B cell (primary cell): ENCODE measurements at regions of chr7 and their contacts with region 1.

Region 1: DNA sequence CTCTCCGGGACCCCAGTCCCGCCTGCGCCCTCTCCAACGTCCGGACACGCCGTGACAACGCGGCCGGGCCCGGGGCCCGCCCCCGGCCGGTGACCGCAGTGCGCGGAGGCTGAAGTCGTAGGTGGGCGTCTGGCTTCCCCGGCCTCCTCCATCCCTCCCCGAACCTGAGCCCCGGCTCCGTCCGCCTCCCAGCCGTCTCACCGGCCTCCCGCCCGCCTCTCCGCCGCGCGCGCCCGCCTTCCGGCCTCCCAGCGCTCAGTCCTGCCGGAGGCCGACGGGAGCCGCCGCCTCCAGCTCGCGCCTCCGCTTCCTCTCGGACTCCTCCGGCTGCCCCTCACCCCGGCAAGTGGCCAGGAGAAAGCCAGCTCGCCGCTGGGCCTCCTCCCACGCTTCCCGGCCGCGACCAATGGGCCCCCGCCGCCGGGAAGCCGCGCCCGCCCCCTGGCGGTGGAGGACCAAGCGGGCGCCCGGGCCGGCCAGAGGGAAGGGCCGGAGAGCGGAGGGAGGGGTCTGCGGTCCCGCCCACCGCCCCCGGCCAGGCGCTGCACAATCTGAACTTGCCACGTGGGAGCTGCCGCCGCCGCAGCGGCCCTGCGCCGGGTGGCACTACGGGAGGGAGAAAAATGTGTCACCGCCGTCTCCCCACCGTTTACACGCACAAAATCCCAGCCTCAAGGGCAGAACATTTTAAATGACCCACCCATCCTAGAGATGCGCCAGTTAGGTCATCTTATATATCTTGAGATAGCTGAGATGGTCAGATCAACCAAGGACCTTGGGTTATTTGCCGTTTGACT is at the start of gene FAM3C:
- DNase-seq: peak; percentile 94
- ATAC-seq: peak; percentile 89
- H3K4me3 ChIP-seq: peak within 1 kb of the TSS; percentile 65 to 90 (median 82)
- H3K4me3 Mint-ChIP-seq: peak within 1 kb of the TSS; percentile 92
- H3K27ac ChIP-seq: peak within 1 kb of the TSS; percentile 82 to 96
- H3K27ac Mint-ChIP-seq: peak within 1 kb of the TSS; percentile 97
- H3K4me1 ChIP-seq: peaks cover 32 to 36% of the 10 kb centered on the region in 2 donors
- H3K4me1 Mint-ChIP-seq: peaks cover 42% of the 10 kb centered on the region
- H3K27me3 ChIP-seq: no peaks in the 10 kb centered on the region
- H3K27me3 Mint-ChIP-seq: no peaks in the 10 kb centered on the region
- CTCF ChIP-seq: peak; percentile 91
- total RNA-seq, gene FAM3C: 73.1 and 75.4 TPM in 2 replicates

Region 2: DNA sequence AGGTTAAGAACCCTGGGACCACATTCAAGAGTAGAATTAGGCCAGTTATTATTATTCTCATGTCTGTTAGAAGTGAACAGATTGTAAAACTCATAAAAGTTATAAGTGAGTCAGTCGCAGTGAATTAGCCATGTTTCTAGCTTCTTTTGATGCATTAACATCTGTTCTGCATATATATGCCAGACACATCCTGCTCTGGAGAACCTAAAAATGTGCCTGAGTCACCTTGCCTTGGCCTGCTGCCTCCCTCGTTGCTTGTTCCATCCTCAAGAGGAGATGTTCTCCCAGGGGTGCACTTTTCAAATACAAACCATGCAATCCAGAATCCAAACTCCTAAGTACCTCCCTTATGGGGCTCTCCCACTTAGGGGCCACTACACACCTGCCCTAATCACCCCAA is 553.0 kb before region 1 on chr7:
- CTCF ChIA-PET with region 1: no interaction called
- POLR2A ChIA-PET with region 1: no interaction called
- intact Hi-C with region 1: no loop called
- DNase-seq: no peak
- ATAC-seq: no peak
- H3K4me3 ChIP-seq: no peak overlapping the region
- H3K4me3 Mint-ChIP-seq: no peak overlapping the region
- H3K27ac ChIP-seq: no peak overlapping the region
- H3K27ac Mint-ChIP-seq: no peak overlapping the region
- H3K4me1 ChIP-seq: no peaks in the 10 kb centered on the region
- H3K4me1 Mint-ChIP-seq: no peaks in the 10 kb centered on the region
- H3K27me3 ChIP-seq: no peaks in the 10 kb centered on the region
- H3K27me3 Mint-ChIP-seq: peaks cover 9% of the 10 kb centered on the region
- CTCF ChIP-seq: no peak

Region 3: GRCh38 chr7:120950539-120951308 is 445.4 kb before region 1 on chr7 and contains the start of gene ING3:
- CTCF ChIA-PET with region 1: interaction called, 5 read pairs
- POLR2A ChIA-PET with region 1: no interaction called
- intact Hi-C with region 1: loop called (anchors 1 kb)
- DNase-seq: peak; percentile 99
- ATAC-seq: peak; percentile 91
- H3K4me3 ChIP-seq: peak within 1 kb of the TSS; percentile 71 to 99 (median 83)
- H3K4me3 Mint-ChIP-seq: peak within 1 kb of the TSS; percentile 99
- H3K27ac ChIP-seq: peak within 1 kb of the TSS; percentile 95 to 96
- H3K27ac Mint-ChIP-seq: peak within 1 kb of the TSS; percentile 99
- H3K4me1 ChIP-seq: peaks cover 14 to 15% of the 10 kb centered on the region in 2 donors
- H3K4me1 Mint-ChIP-seq: peaks cover 20% of the 10 kb centered on the region
- H3K27me3 ChIP-seq: no peaks in the 10 kb centered on the region
- H3K27me3 Mint-ChIP-seq: peaks cover 3% of the 10 kb centered on the region
- CTCF ChIP-seq: no peak
- total RNA-seq, gene ING3: 38.0 and 41.7 TPM in 2 replicates

Region 4: GRCh38 chr7:121329191-121330052 is 66.7 kb before region 1 on chr7:
- CTCF ChIA-PET with region 1: interaction called, 4 read pairs
- POLR2A ChIA-PET with region 1: no interaction called
- intact Hi-C with region 1: loop called (anchors 5 kb)
- DNase-seq: peak; percentile 65
- ATAC-seq: peak; percentile 49
- H3K4me3 ChIP-seq: peak overlapping the region; percentile 54 to 97 (median 86)
- H3K4me3 Mint-ChIP-seq: peak overlapping the region; percentile 91
- H3K27ac ChIP-seq: peak overlapping the region; percentile 25 to 32
- H3K27ac Mint-ChIP-seq: peak overlapping the region; percentile 92
- H3K4me1 ChIP-seq: peaks cover 20 to 21% of the 10 kb centered on the region in 2 donors
- H3K4me1 Mint-ChIP-seq: peaks cover 46% of the 10 kb centered on the region
- H3K27me3 ChIP-seq: peaks cover 0 to 3% (median 0%) of the 10 kb centered on the region in 4 experiments
- H3K27me3 Mint-ChIP-seq: peaks cover 13% of the 10 kb centered on the region
- CTCF ChIP-seq: peak; percentile 26

Region 5: GRCh38 chr7:121366852-121367431 is 29.2 kb before region 1 on chr7:
- CTCF ChIA-PET with region 1: interaction called, 286 read pairs
- POLR2A ChIA-PET with region 1: interaction called, 6 read pairs
- intact Hi-C with region 1: loop called (anchors 1 kb)
- DNase-seq: peak; percentile 74
- ATAC-seq: no peak
- H3K4me3 ChIP-seq: no peak overlapping the region
- H3K4me3 Mint-ChIP-seq: peak overlapping the region; percentile 6
- H3K27ac ChIP-seq: peak overlapping the region in 1 of 2 donors; percentile 76
- H3K27ac Mint-ChIP-seq: peak overlapping the region; percentile 44
- H3K4me1 ChIP-seq: peaks cover 42 to 46% of the 10 kb centered on the region in 2 donors
- H3K4me1 Mint-ChIP-seq: peaks cover 55% of the 10 kb centered on the region
- H3K27me3 ChIP-seq: no peaks in the 10 kb centered on the region
- H3K27me3 Mint-ChIP-seq: no peaks in the 10 kb centered on the region
- CTCF ChIP-seq: peak; percentile 92

Region 6: DNA sequence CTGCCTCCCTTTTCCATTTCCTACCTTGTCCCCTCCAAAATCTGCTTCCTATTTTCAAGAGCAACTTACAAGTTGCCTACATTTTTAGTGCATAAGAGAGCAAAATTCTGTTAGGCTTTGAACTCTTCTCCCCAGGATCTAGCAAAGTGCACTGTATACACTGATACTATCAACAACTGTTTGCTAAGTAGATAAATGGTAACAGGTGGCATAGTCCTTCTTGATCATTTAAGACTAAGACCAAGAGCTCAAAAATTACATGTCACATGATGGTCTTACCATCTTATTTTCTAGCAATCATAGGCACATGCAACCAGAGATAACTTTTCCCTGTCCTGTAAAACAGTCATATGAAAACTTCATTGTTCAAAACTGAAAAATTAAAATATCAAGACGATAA is 16.2 kb before region 1 on chr7:
- CTCF ChIA-PET with region 1: interaction called, 286 read pairs
- POLR2A ChIA-PET with region 1: interaction called, 26 read pairs
- intact Hi-C with region 1: no loop called
- DNase-seq: no peak
- ATAC-seq: no peak
- H3K4me3 ChIP-seq: no peak overlapping the region
- H3K4me3 Mint-ChIP-seq: peak overlapping the region; percentile 58
- H3K27ac ChIP-seq: peak overlapping the region; percentile 42 to 99
- H3K27ac Mint-ChIP-seq: peak overlapping the region; percentile 90
- H3K4me1 ChIP-seq: peaks cover 84 to 87% of the 10 kb centered on the region in 2 donors
- H3K4me1 Mint-ChIP-seq: peaks cover 83% of the 10 kb centered on the region
- H3K27me3 ChIP-seq: no peaks in the 10 kb centered on the region
- H3K27me3 Mint-ChIP-seq: no peaks in the 10 kb centered on the region
- CTCF ChIP-seq: no peak

Region 7: DNA sequence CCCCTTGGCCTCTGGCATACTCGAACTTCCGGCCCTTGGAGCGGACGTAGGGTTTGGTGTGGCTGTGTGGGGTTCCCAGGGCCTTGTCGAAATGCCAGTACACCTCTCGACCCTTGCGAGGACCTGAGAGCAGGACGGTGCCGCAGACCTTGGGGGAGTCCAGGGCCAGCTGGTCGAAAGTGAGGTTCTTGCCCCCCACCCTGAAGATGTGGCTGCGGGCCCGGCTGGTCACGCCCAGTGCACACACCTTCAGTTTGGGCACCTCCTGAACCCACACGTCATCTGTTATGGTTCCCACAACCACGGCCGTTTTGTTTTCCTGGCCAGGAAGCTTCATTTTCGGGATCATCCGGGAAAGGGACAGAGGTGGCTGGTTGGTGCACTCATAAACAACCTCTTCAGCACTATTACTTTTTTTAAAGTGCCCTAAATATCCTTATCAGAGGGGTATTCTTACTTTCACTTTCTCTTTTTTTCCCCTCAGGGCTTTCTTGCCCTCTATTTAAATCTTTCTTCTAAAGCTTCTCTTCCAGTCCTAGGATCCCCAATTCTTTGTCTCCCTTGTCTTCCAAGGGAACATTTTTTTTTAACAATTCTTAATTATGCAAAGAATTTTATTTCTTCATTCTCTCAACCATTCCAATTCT is 44.8 kb after region 1 on chr7:
- CTCF ChIA-PET with region 1: interaction called, 35 read pairs
- POLR2A ChIA-PET with region 1: interaction called, 8 read pairs
- intact Hi-C with region 1: loop called (anchors 1 kb)
- DNase-seq: peak; percentile 40
- ATAC-seq: peak; percentile 39
- H3K4me3 ChIP-seq: peak overlapping the region in 4 of 5 experiments; percentile 7 to 39 (median 27)
- H3K4me3 Mint-ChIP-seq: peak overlapping the region; percentile 78
- H3K27ac ChIP-seq: peak overlapping the region; percentile 44 to 51
- H3K27ac Mint-ChIP-seq: peak overlapping the region; percentile 85
- H3K4me1 ChIP-seq: peaks cover 19 to 30% of the 10 kb centered on the region in 2 donors
- H3K4me1 Mint-ChIP-seq: peaks cover 36% of the 10 kb centered on the region
- H3K27me3 ChIP-seq: no peaks in the 10 kb centered on the region
- H3K27me3 Mint-ChIP-seq: no peaks in the 10 kb centered on the region
- CTCF ChIP-seq: no peak